HCT116 (cell line): ENCODE measurements at regions of chr18 and their contacts with region 1.

Region 1: DNA sequence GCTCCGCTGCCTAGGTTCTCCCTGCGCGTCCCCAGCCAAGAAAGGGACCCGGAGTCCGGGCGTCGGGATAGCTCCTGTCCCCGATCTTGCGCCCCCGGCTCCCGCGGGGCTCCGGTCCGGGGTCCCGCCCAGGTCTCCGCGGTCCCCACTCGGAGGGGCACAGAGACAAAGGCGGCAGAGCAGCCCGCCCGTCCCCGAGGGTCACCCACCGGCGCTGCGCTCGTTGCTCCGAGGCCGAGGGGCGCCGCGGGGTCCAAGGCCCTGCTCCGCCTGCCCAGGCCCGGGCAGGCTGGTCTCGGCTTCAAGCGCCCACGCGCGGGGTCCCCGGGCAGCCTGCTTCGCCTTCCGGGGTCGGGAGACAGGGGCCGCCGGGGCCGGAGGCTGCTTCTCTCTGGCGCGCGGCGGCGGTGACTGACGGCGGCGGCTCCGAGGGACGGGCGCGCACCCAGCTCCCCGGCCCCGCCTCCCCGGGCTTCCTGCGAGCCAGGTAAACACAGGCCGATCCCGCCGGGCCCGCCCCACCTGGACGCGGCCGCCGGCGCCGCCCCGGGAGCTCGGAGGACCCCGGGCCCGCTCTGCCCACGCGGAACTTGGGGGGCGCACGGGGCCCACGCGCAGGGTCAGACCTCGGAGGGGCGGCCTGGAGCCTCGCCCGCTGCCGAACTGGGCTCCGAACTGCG is at the start of gene MBP:
- DNase-seq: no peak
- ATAC-seq: peak; percentile 83
- H3K4me3 ChIP-seq: peak within 1 kb of the TSS; percentile 71 to 79
- H3K27ac ChIP-seq: peak within 1 kb of the TSS; percentile 90
- H3K4me1 ChIP-seq: peaks cover 27 to 51% of the 10 kb centered on the region in 2 experiments
- H3K27me3 ChIP-seq: no peaks in the 10 kb centered on the region
- CTCF ChIP-seq: no peak
- POLR2A ChIP-seq: peak; percentile 66
- RAD21 ChIP-seq: no peak
- total RNA-seq, gene MBP: 34.9 TPM

Region 2: DNA sequence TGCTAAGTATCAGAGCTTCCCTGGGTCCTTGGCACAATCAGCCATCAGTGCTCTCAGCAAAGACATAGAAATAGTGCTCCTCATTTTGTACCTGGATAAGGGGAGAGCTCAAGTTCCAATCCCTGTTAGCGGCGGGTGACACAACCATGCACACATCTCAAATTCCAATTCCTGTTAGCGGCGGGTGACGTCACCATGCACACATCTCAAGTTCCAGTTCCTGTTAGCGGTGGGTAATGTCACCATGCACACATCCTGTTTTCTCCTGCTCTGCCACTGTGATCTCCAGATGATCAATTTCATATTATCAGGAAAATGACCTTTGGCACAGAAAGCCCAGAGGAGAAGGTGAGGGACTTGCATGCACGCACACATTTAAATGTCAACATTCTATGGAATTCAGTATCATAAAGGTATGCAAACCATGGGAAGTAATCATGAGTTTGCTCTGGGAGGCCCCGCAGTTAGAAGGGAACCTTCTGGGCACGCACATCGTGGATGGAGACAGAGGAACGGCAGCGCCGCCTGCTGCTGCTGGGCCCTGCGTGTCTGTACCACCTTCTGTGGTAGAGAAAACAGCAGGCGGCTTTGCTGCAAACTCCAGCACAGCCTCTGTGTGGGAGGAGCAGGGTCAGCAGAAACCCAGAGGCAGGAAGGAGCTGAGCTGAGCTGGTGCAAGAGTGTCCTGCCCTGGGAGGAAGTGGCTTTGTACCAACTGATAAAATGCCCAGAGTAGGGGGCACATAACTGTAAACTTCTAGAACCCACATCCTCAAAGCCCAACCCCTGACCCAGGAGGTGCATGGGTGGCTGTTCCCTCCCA is 77.7 kb before region 1 on chr18:
- CTCF ChIA-PET with region 1: no interaction called
- POLR2A ChIA-PET with region 1: no interaction called
- RAD21 ChIA-PET with region 1: no interaction called
- intact Hi-C with region 1: loop called (anchors 2 kb)
- DNase-seq: no peak
- ATAC-seq: no peak
- H3K4me3 ChIP-seq: no peak overlapping the region
- H3K27ac ChIP-seq: no peak overlapping the region
- H3K4me1 ChIP-seq: peaks cover 0 to 5% of the 10 kb centered on the region in 2 experiments; a peak in 1 of 4 replicates
- H3K27me3 ChIP-seq: no peaks in the 10 kb centered on the region
- CTCF ChIP-seq: no peak
- POLR2A ChIP-seq: no peak
- RAD21 ChIP-seq: no peak

Region 3: GRCh38 chr18:77177009-77177408 is 44.5 kb after region 1 on chr18:
- CTCF ChIA-PET with region 1: no interaction called
- POLR2A ChIA-PET with region 1: no interaction called
- RAD21 ChIA-PET with region 1: no interaction called
- intact Hi-C with region 1: no loop called
- DNase-seq: no peak
- ATAC-seq: no peak
- H3K4me3 ChIP-seq: no peak overlapping the region
- H3K27ac ChIP-seq: no peak overlapping the region
- H3K4me1 ChIP-seq: no peaks in the 10 kb centered on the region
- H3K27me3 ChIP-seq: no peaks in the 10 kb centered on the region
- CTCF ChIP-seq: no peak
- POLR2A ChIP-seq: no peak
- RAD21 ChIP-seq: no peak

Region 4: GRCh38 chr18:77207540-77207939 is 75.0 kb after region 1 on chr18:
- CTCF ChIA-PET with region 1: interaction called, 3 read pairs
- POLR2A ChIA-PET with region 1: no interaction called
- RAD21 ChIA-PET with region 1: no interaction called
- intact Hi-C with region 1: loop called (anchors 5 kb)
- DNase-seq: peak; percentile 51
- ATAC-seq: peak; percentile 94
- H3K4me3 ChIP-seq: no peak overlapping the region
- H3K27ac ChIP-seq: no peak overlapping the region
- H3K4me1 ChIP-seq: peaks cover 8 to 14% of the 10 kb centered on the region in 2 experiments
- H3K27me3 ChIP-seq: no peaks in the 10 kb centered on the region
- CTCF ChIP-seq: peak; percentile 61 to 88 (median 82); a peak in 5 of 6 replicates
- POLR2A ChIP-seq: no peak
- RAD21 ChIP-seq: 0 out of 2 replicates have a peak, but pooled peaks have one; percentile 17